MCF 10A (cell line): ENCODE measurements at regions of chr5 and their contacts with region 1.

Region 1: DNA sequence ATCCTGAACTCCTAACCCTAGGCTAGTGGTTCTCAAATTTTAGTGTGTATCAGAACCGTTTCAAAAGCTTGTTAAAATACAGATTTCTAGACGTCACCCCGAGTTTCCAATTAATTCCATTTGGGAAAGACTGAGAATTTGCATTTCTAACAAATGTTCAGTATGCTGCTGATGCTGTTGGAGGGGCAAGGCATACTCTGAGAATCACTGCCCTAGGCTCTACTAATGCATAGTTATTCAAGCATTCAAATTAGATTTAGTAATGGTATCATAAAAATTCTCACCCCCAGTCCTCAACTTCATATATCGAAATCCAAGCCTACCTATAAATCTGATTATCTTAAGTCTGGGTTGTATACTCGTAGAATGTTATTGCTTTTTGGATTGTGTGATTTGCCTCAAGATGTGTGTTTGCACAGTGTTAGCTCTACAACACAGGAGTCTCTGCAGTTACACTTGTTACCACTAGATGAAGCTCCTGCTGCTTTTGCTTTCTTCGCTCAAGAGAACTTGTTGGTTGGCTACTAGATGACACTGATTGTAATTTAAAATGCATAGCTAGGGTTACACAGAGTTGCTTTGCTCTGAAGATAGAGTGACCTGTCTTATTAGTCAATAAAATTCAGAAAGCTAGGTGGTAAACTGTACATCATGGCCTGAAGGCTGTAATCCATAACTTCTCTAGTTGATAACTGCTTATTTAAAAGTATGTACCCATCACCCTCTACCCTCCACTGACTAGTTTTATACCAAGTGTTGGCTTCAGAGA is 7.5 kb upstream of the ERAP2 start:
- DNase-seq: peak; percentile 69
- H3K4me3 Mint-ChIP-seq: no peak overlapping the region
- H3K27ac Mint-ChIP-seq: no peak overlapping the region
- H3K4me1 Mint-ChIP-seq: peaks cover 6% of the 10 kb centered on the region
- H3K27me3 Mint-ChIP-seq: no peaks in the 10 kb centered on the region
- CTCF ChIP-seq: peak; percentile 95

Region 2: DNA sequence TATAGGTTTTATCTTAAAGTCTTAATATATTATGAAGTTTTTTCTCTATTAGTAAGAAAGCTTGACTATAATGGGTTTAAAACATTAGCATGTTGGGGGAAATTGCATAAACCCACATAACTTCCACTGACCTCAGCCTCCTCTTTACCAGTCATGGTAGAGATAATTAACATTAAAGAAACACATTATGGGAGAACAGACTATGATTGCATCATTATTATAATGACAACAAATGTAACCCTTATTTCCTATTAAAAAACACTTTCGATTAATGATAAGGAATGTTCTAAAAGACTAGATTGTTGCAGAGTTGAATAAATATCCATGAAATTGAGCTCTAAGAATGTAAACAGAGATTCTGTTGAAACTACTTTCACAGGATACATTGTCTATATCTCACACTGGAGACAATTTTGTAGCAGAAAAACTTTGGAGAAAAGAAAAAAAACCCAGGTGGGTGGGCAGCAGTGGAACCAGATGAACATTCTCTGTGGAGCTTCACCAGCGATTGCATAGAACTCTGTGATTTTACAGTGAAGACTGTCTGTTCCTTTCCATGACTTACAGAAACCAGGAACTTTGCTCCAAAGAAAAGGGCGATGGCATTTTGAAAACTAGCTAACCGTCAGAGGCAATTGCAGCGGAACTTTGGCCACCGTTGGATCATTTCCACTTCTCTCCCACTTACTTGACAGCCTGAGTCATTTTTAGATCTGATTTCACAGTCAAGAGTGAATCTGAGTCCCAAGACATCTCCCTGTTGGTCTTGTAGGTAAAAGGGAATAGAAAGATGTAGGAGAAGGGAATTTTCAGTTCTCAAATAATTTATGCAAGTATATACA is 13.5 kb before region 1 on chr5:
- CTCF ChIA-PET with region 1: interaction called, 36 read pairs
- POLR2A ChIA-PET with region 1: interaction called, 4 read pairs
- intact Hi-C with region 1: no loop called
- DNase-seq: peak; percentile 20
- H3K4me3 Mint-ChIP-seq: no peak overlapping the region
- H3K27ac Mint-ChIP-seq: no peak overlapping the region
- H3K4me1 Mint-ChIP-seq: no peaks in the 10 kb centered on the region
- H3K27me3 Mint-ChIP-seq: no peaks in the 10 kb centered on the region
- CTCF ChIP-seq: no peak

Region 3: GRCh38 chr5:96946381-96946780 is 77.6 kb after region 1 on chr5:
- CTCF ChIA-PET with region 1: interaction called, 11 read pairs
- POLR2A ChIA-PET with region 1: no interaction called
- intact Hi-C with region 1: no loop called
- DNase-seq: no peak
- H3K4me3 Mint-ChIP-seq: no peak overlapping the region
- H3K27ac Mint-ChIP-seq: no peak overlapping the region
- H3K4me1 Mint-ChIP-seq: peaks cover 16% of the 10 kb centered on the region
- H3K27me3 Mint-ChIP-seq: no peaks in the 10 kb centered on the region
- CTCF ChIP-seq: no peak

Region 4: GRCh38 chr5:96997265-96997859 is 128.6 kb after region 1 on chr5:
- CTCF ChIA-PET with region 1: interaction called, 25 read pairs
- POLR2A ChIA-PET with region 1: no interaction called
- intact Hi-C with region 1: loop called (anchors 1 kb)
- DNase-seq: peak; percentile 50
- H3K4me3 Mint-ChIP-seq: no peak overlapping the region
- H3K27ac Mint-ChIP-seq: no peak overlapping the region
- H3K4me1 Mint-ChIP-seq: no peaks in the 10 kb centered on the region
- H3K27me3 Mint-ChIP-seq: no peaks in the 10 kb centered on the region
- CTCF ChIP-seq: peak; percentile 36

Region 5: GRCh38 chr5:97162045-97162444 is 293.3 kb after region 1 on chr5:
- CTCF ChIA-PET with region 1: interaction called, 79 read pairs
- POLR2A ChIA-PET with region 1: interaction called, 4 read pairs
- intact Hi-C with region 1: loop called (anchors 1 kb)
- DNase-seq: peak; percentile 80
- H3K4me3 Mint-ChIP-seq: no peak overlapping the region
- H3K27ac Mint-ChIP-seq: no peak overlapping the region
- H3K4me1 Mint-ChIP-seq: peaks cover 5% of the 10 kb centered on the region
- H3K27me3 Mint-ChIP-seq: peaks cover 11% of the 10 kb centered on the region
- CTCF ChIP-seq: peak; percentile 81